PC-3 (cell line): ENCODE measurements at regions of chr2 and their contacts with region 1.

Region 1: DNA sequence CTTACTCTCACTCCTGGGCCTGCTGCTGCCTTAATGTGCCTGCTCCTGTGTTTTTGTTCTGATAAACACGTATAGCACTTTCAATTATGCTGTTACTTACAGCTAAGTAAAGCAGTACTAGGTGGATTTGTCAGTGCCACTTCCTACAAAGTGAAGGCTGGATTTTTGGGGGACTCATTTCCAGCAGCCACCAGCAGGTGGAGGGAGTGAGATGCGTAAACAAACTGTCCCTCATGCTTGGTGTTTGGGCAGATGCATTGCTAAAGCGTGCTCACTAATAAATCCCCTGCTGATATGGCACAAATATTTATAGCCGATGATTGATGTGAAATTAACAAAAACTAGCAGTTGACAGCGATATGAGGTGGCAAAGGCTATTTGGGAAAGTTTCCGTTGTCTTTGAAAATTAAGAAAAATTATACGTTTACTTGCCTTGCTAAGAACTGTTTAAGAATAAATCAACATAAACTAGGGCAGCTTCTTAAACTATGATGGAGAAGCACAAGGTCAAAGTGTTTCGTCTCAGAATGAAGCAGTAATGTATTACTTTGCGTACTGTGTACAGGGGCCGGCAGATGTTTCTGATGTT is 101.7 kb downstream of the AGAP1 start:
- DNase-seq: peak; percentile 80
- ATAC-seq: peak; percentile 66
- H3K4me3 ChIP-seq: no peak overlapping the region
- H3K27ac ChIP-seq: no peak overlapping the region
- H3K4me1 ChIP-seq: no peaks in the 10 kb centered on the region
- H3K27me3 ChIP-seq: no peaks in the 10 kb centered on the region
- CTCF ChIP-seq: peak; percentile 84

Region 2: DNA sequence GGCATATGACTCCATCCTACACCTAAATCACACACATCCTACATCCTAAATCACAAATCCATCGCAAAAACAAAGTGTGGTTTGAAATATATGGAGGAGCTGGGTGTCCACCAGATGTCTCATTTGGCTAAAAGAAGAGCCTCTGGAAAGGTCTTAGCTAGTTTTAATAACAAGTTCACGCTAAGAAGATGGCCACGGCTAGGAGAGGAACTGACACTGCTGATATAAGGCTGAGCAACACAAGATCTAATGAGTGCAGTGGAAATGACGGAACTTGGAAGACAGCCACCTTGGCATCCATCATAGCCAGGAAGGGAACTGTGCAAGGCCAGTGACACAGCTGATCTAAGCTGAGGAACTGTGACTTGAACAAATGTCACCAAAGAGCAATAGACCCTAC is 161.7 kb before region 1 on chr2:
- CTCF ChIA-PET with region 1: interaction called, 22 read pairs
- POLR2A ChIA-PET with region 1: no interaction called
- intact Hi-C with region 1: loop called (anchors 1 kb)
- DNase-seq: peak; percentile 61
- ATAC-seq: peak; percentile 88
- H3K4me3 ChIP-seq: no peak overlapping the region
- H3K27ac ChIP-seq: no peak overlapping the region
- H3K4me1 ChIP-seq: no peaks in the 10 kb centered on the region
- H3K27me3 ChIP-seq: no peaks in the 10 kb centered on the region
- CTCF ChIP-seq: peak; percentile 31; the same call in 1 of the 2 replicates

Region 3: DNA sequence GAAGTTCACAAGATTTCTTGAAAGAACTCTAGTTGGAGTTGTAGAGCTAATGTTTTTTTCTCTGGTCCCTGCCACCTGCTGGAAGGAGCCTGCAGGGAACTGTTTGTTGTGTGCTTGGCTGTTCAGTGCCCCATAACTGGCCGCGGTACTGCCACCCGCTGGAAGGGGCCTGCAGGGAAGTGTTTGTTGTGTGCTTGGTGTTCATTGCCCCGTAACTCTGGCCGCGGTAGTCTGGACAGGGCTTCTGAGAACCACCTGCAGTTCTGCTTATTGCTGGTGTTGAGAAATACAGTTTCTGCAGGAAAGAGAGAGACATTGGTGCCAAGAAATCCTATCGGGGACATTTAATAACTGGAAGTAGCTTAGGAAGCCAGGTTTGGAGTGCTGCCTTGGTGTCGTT is 43.6 kb before region 1 on chr2:
- CTCF ChIA-PET with region 1: interaction called, 23 read pairs
- POLR2A ChIA-PET with region 1: no interaction called
- intact Hi-C with region 1: loop called (anchors 1 kb)
- DNase-seq: peak; percentile 71
- ATAC-seq: peak; percentile 98
- H3K4me3 ChIP-seq: no peak overlapping the region
- H3K27ac ChIP-seq: no peak overlapping the region
- H3K4me1 ChIP-seq: peaks cover 8% of the 10 kb centered on the region; the same call in 1 of the 2 replicates
- H3K27me3 ChIP-seq: no peaks in the 10 kb centered on the region
- CTCF ChIP-seq: peak; percentile 83

Region 4: DNA sequence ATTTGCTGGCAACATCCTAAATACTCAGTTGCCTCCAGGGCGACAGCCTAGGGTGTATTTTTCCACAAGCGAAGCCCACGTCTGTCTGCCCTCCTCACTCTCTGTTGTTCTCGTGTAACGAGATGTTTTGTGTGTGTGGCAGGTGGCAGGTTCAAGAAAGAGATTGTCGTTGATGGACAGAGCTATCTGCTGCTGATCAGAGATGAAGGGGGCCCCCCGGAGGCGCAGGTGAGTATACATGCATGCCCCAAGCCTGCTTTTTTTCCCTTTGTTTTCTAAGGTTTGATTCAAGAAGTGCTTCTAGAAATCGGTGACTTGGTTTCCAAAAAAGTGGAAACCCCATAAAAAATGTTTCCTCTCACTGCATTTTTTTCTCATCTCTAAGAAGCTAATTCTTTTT is 145.3 kb after region 1 on chr2:
- CTCF ChIA-PET with region 1: interaction called, 25 read pairs
- POLR2A ChIA-PET with region 1: no interaction called
- intact Hi-C with region 1: loop called (anchors 1 kb)
- DNase-seq: peak; percentile 42
- ATAC-seq: peak; percentile 81
- H3K4me3 ChIP-seq: no peak overlapping the region
- H3K27ac ChIP-seq: no peak overlapping the region
- H3K4me1 ChIP-seq: no peaks in the 10 kb centered on the region
- H3K27me3 ChIP-seq: no peaks in the 10 kb centered on the region
- CTCF ChIP-seq: peak; percentile 70